BJ (cell line): ENCODE measurements at regions of chr12 and their contacts with region 1.

Region 1: GRCh38 chr12:126369487-126370463 is 1304.5 kb downstream of the AACS start:
- DNase-seq: peak; percentile 25
- H3K4me3 ChIP-seq: no peak overlapping the region
- H3K27me3 ChIP-seq: no peaks in the 10 kb centered on the region
- CTCF ChIP-seq: peak; percentile 52

Region 2: GRCh38 chr12:126156806-126157574 is 212.8 kb before region 1 on chr12:
- CTCF ChIA-PET with region 1: no interaction called
- POLR2A ChIA-PET with region 1: no interaction called
- DNase-seq: no peak
- H3K4me3 ChIP-seq: no peak overlapping the region
- H3K27me3 ChIP-seq: no peaks in the 10 kb centered on the region
- CTCF ChIP-seq: no peak

Region 3: GRCh38 chr12:126349383-126349782 is 20.4 kb before region 1 on chr12:
- CTCF ChIA-PET with region 1: interaction called, 10 read pairs
- POLR2A ChIA-PET with region 1: no interaction called
- DNase-seq: no peak
- H3K4me3 ChIP-seq: no peak overlapping the region
- H3K27me3 ChIP-seq: no peaks in the 10 kb centered on the region
- CTCF ChIP-seq: no peak

Region 4: DNA sequence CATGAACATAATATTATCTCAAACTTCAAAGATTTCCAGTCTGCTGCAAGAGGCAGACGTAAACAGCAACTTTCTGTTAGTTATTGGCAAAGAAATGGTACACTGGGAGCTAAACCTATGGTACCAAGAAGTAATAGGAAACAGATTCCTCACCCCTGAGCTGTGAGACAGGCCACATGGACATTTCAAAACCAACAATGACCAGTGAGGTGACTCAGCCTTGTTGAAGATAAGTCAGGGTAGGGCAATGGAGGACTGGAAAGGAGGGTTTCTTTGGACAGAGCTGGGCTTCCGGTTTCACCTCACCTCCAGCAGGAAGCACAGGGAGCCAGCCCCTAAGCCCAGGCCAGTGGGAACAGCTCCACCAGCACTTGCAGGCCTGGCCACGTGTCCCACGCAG is 16.0 kb after region 1 on chr12:
- CTCF ChIA-PET with region 1: interaction called, 27 read pairs
- POLR2A ChIA-PET with region 1: interaction called, 4 read pairs
- DNase-seq: no peak
- H3K4me3 ChIP-seq: no peak overlapping the region
- H3K27me3 ChIP-seq: no peaks in the 10 kb centered on the region
- CTCF ChIP-seq: no peak

Region 5: GRCh38 chr12:126447346-126447745 is 77.6 kb after region 1 on chr12:
- CTCF ChIA-PET with region 1: no interaction called
- POLR2A ChIA-PET with region 1: no interaction called
- DNase-seq: no peak
- H3K4me3 ChIP-seq: no peak overlapping the region
- H3K27me3 ChIP-seq: no peaks in the 10 kb centered on the region; the same call in 1 of the 2 replicates
- CTCF ChIP-seq: no peak

Region 6: DNA sequence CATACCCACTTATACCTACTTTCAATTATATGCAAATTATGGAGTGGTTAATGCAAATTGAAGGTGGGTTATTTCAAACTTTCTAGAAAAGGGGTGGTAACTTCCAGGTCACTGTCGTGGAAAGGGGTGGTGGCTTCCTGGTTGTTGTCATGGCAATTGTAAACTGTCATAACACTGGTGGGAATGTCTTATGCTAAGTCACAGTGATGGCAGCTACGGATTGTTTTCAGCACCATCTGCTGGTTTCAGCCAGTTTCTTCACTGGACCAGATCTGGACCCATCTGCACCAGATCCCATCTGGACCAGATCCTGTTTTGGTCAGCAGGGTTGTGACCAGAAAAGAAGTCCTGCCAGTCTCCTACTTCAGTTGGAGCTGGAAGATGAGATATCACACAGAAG is 164.7 kb after region 1 on chr12:
- CTCF ChIA-PET with region 1: no interaction called
- POLR2A ChIA-PET with region 1: no interaction called
- DNase-seq: no peak
- H3K4me3 ChIP-seq: no peak overlapping the region
- H3K27me3 ChIP-seq: no peaks in the 10 kb centered on the region
- CTCF ChIP-seq: no peak